ENCODE measurements at regions of chr14 and their contacts with region 1.

Region 1: GRCh38 chr14:56474419-56475022 is 105.1 kb upstream of the TMEM260 start:
- DNase-seq: no peak
- H3K4me3 ChIP-seq: no peak overlapping the region
- H3K27ac ChIP-seq: no peak overlapping the region
- H3K4me1 ChIP-seq: no peaks in the 10 kb centered on the region
- H3K27me3 ChIP-seq: no peaks in the 10 kb centered on the region
- CTCF ChIP-seq: peak; percentile 40 to 74 (median 60)
- POLR2A ChIP-seq: no peak

Region 2: DNA sequence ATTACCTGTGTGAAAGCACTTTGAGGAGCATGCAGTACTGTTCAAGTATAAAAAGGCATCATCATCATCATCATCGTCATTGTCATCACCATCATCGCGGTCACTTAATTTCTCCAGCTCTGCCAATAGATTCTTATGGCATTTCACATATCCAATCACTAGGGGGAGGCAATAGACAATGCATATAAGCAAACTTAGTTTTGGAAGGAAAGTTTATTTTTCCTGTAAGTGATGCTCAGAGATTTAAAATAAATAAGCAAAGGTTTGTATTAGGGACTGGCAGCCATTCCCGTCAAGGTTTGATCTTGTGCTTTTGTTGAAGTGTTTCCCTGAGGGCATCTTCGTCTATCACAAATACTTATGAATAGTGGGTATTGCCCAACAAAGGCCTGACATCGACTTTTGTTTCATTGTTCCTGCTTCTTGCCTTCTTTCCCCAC is 767.1 kb before region 1 on chr14:
- intact Hi-C with region 1: loop called (anchors 10 kb)
- DNase-seq: no peak
- H3K4me3 ChIP-seq: no peak overlapping the region
- H3K27ac ChIP-seq: no peak overlapping the region
- H3K4me1 ChIP-seq: no peaks in the 10 kb centered on the region
- H3K27me3 ChIP-seq: no peaks in the 10 kb centered on the region
- CTCF ChIP-seq: peak; percentile 63 to 71 (median 69)
- POLR2A ChIP-seq: no peak

Region 3: DNA sequence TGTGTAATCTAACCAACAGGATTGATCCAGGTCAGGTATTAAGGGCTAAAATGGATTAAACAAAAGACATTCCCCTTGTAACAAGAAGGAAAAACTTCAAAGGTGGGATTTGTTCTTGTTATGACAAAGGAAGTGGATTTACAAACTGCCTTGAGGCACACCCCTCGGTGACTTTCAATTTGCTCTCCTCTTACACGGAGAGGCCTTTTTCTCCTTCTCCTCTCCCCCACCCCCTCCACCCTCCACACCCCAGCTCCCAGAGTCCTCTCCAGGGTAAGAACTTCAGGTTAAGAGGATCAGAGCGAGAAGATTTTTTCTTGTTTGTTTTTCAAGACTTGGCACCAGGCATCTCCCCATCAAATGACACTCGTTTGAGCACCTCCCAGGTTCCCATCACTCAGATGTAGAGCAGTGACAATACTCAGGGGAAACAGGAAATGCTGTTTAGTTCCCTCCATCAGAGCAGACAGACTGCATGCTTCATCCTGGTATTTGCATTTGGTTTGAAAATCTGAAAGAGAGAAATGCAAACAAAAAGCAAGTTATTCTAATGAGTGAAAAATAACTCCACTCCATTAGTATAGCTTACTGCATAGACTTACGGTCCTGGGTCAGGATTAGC is 27.5 kb after region 1 on chr14:
- intact Hi-C with region 1: no loop called
- DNase-seq: no peak
- H3K4me3 ChIP-seq: no peak overlapping the region
- H3K27ac ChIP-seq: no peak overlapping the region
- H3K4me1 ChIP-seq: no peaks in the 10 kb centered on the region
- H3K27me3 ChIP-seq: no peaks in the 10 kb centered on the region
- CTCF ChIP-seq: no peak
- POLR2A ChIP-seq: no peak

Region 4: GRCh38 chr14:56603648-56604047 is 129.1 kb after region 1 on chr14:
- intact Hi-C with region 1: no loop called
- DNase-seq: no peak
- H3K4me3 ChIP-seq: no peak overlapping the region
- H3K27ac ChIP-seq: no peak overlapping the region
- H3K4me1 ChIP-seq: no peaks in the 10 kb centered on the region
- H3K27me3 ChIP-seq: no peaks in the 10 kb centered on the region
- CTCF ChIP-seq: no peak
- POLR2A ChIP-seq: no peak

Region 5: GRCh38 chr14:57189070-57189469 is 714.5 kb after region 1 on chr14:
- intact Hi-C with region 1: no loop called
- DNase-seq: no peak
- H3K4me3 ChIP-seq: no peak overlapping the region
- H3K27ac ChIP-seq: no peak overlapping the region
- H3K4me1 ChIP-seq: no peaks in the 10 kb centered on the region
- H3K27me3 ChIP-seq: no peaks in the 10 kb centered on the region
- CTCF ChIP-seq: no peak
- POLR2A ChIP-seq: no peak

Measured in vagina (tissue), 2 donors.